H1 (cell line): ENCODE measurements at regions of chr7 and their contacts with region 1.

Region 1: GRCh38 chr7:143391462-143392404 is 10.6 kb downstream of the ZYX start:
- DNase-seq: no peak
- H3K4me3 ChIP-seq: no peak overlapping the region
- H3K27ac ChIP-seq: no peak overlapping the region
- H3K4me1 ChIP-seq: no peaks in the 10 kb centered on the region; a peak in 1 of 7 replicates
- H3K27me3 ChIP-seq: no peaks in the 10 kb centered on the region
- CTCF ChIP-seq: no peak
- EP300 ChIP-seq: no peak
- POLR2A ChIP-seq: no peak
- RAD21 ChIP-seq: no peak

Region 2: DNA sequence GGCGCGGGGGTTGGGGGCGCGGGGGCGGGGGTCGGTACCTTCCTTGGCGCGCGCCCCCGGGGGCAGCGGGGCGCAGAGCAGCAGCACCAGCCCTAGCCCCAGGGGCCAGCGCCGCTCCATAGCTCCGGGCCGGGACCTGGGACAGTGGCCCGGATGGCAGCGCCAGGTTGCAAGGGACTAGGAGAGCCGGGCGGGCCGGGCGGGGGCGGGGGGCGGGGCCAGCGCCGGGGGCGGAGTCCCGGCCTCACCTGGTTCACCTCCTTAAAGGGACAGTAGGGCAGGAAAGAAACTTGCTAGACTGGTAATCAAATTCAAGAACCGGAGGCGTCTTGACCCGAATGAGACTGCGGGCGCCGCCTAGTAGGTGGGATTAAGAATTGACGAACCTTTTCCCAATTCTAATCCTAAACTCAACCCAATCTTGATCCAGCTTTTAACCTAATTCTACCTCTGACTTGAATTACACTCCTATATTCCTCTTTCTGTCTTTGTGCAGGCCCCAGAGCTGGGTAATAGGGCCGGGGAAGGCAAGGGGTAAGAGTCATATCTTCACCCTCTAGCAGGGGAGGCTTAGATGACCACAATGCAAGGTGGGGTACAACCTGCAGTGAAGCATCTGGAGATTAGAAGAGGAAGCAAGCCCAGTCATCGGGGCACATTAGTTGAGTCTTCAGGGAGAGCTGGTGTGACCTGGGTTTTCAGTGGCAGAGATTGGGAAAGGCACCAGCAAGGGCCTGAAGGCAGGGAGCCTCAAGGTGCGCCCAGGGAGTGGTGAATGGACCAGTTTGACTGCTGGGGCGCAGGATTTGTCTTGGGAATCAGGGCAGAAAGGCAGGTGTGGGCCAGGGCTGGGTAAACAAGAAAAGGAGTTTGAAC is 17.2 kb after region 1 on chr7 and contains the start of gene EPHA1:
- CTCF ChIA-PET with region 1: interaction called, 242 read pairs
- POLR2A ChIA-PET with region 1: interaction called, 518 read pairs
- DNase-seq: peak; percentile 50 to 83
- H3K4me3 ChIP-seq: peak within 1 kb of the TSS; percentile 86 to 91 (median 88)
- H3K27ac ChIP-seq: peak within 1 kb of the TSS; percentile 71
- H3K4me1 ChIP-seq: peaks cover 18 to 42% (median 31%) of the 10 kb centered on the region in 4 experiments
- H3K27me3 ChIP-seq: no peaks in the 10 kb centered on the region
- CTCF ChIP-seq: peak; percentile 47 to 72 (median 58)
- EP300 ChIP-seq: peak in 1 of 2 experiments; percentile 39; a peak in 1 of 3 replicates
- POLR2A ChIP-seq: peak in 1 of 2 experiments; percentile 34; a peak in 1 of 3 replicates
- RAD21 ChIP-seq: peak; percentile 47 to 57
- total RNA-seq, gene EPHA1: 133 and 139 TPM in 2 replicates

Region 3: DNA sequence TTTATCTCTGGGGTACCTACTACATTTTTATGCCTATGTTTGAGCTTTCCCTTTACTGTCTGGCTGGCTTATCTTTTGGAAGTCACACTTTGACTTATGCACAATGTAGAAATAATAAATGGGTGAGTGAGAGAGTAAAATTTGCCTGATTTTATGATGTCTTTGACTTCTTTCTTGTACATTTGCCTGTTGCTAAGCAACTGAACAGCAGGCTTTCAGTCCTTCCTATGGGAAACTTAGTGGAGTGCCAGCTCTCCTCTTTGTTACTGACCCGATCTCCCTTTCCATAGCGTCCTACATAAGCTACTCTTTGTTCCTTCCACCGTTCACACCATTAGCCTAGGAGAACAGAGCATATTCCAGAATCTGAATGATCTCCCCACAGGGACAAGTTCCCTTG is 55.7 kb after region 1 on chr7:
- CTCF ChIA-PET with region 1: no interaction called
- POLR2A ChIA-PET with region 1: no interaction called
- DNase-seq: no peak
- H3K4me3 ChIP-seq: no peak overlapping the region
- H3K27ac ChIP-seq: no peak overlapping the region
- H3K4me1 ChIP-seq: peaks cover 0 to 6% (median 0%) of the 10 kb centered on the region in 4 experiments; a peak in 1 of 7 replicates
- H3K27me3 ChIP-seq: peaks cover 0 to 1% (median 0%) of the 10 kb centered on the region in 4 experiments; a peak in 1 of 7 replicates
- CTCF ChIP-seq: no peak
- EP300 ChIP-seq: no peak
- POLR2A ChIP-seq: no peak
- RAD21 ChIP-seq: no peak

Region 4: GRCh38 chr7:143507534-143508055 is 115.9 kb after region 1 on chr7:
- CTCF ChIA-PET with region 1: no interaction called
- POLR2A ChIA-PET with region 1: no interaction called
- DNase-seq: no peak
- H3K4me3 ChIP-seq: no peak overlapping the region
- H3K27ac ChIP-seq: no peak overlapping the region
- H3K4me1 ChIP-seq: peaks cover 0 to 7% (median 0%) of the 10 kb centered on the region in 4 experiments; a peak in 1 of 7 replicates
- H3K27me3 ChIP-seq: no peaks in the 10 kb centered on the region
- CTCF ChIP-seq: no peak
- EP300 ChIP-seq: no peak
- POLR2A ChIP-seq: no peak
- RAD21 ChIP-seq: no peak